ENCODE measurements at regions of chr12 and their contacts with region 1.

Region 1: GRCh38 chr12:66915306-66915904 is 236.5 kb upstream of the GRIP1 start:
- DNase-seq: no peak
- H3K4me3 ChIP-seq: no peak overlapping the region
- H3K27ac ChIP-seq: no peak overlapping the region
- H3K4me1 ChIP-seq: peaks cover 0 to 6% (median 0%) of the 10 kb centered on the region in 4 donors
- H3K27me3 ChIP-seq: no peaks in the 10 kb centered on the region
- CTCF ChIP-seq: no peak
- EP300 ChIP-seq: no peak
- POLR2A ChIP-seq: no peak

Region 2: GRCh38 chr12:66755727-66756395 is 159.5 kb before region 1 on chr12:
- intact Hi-C with region 1: no loop called
- DNase-seq: no peak
- H3K4me3 ChIP-seq: no peak overlapping the region
- H3K27ac ChIP-seq: no peak overlapping the region
- H3K4me1 ChIP-seq: peaks cover 0 to 6% (median 3%) of the 10 kb centered on the region in 4 donors
- H3K27me3 ChIP-seq: no peaks in the 10 kb centered on the region
- CTCF ChIP-seq: no peak
- EP300 ChIP-seq: no peak
- POLR2A ChIP-seq: no peak

Region 3: DNA sequence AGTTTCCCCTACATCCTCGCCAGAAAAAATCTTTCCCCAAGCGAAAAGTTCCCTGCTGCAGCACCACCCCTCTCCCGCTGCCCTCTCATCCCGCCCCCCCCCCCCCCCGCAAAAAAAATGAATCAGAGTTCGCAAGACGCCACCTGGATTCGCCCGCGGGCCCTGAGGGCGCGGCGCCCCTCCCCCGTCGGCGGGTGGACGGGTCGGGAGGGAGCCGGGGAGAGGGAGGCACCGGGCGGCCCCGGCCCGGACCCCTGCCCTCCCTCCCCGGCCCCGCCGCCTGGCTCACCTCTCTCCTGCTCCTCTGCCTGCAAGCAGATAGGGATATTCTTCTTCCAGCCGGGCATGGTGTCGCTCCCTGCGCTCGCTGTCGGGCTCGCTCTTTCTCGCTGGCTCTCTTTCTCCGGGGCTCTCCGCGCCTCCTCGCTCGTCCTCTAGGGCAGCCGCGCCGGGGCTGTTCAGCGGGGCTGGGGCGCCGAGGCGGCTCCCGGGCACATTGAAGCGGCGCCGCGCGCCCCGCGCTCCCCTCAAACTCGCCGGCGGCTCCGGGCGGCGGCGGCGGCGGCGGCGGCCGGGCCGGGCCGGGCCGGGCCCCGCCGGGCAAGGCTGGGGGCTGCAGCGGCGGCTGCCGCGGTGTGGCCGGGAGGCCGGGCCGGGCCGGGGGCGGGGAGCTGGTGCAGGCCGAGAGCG is 153.5 kb after region 1 on chr12:
- intact Hi-C with region 1: loop called (anchors 10 kb)
- DNase-seq: peak; percentile 72
- H3K4me3 ChIP-seq: peak overlapping the region; percentile 76 to 83 (median 79)
- H3K27ac ChIP-seq: peak overlapping the region; percentile 89 to 92 (median 90)
- H3K4me1 ChIP-seq: peaks cover 0 to 27% (median 13%) of the 10 kb centered on the region in 4 donors
- H3K27me3 ChIP-seq: no peaks in the 10 kb centered on the region
- CTCF ChIP-seq: no peak
- EP300 ChIP-seq: no peak
- POLR2A ChIP-seq: no peak

Region 4: DNA sequence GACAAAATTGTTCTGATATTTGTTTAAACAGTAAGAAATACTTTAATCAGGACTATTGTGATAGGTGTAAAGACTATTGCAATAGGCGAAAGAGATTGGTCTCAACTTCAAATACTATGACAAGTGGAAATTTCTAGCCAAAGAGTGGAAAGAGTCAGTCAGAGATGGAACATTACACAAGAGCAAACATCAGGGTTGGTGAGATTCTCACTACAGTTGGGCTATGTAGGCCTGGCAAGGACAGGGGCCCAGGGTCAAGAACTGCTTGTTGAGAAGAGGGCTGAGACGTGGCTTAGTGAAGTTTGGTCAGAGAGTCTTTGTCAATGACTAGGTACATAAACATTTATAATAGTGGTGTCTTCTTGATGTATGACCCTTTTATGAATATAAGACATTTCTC is 373.2 kb after region 1 on chr12:
- intact Hi-C with region 1: no loop called
- DNase-seq: no peak
- H3K4me3 ChIP-seq: no peak overlapping the region
- H3K27ac ChIP-seq: no peak overlapping the region
- H3K4me1 ChIP-seq: peaks cover 0 to 23% (median 0%) of the 10 kb centered on the region in 4 donors
- H3K27me3 ChIP-seq: no peaks in the 10 kb centered on the region
- CTCF ChIP-seq: no peak
- EP300 ChIP-seq: no peak
- POLR2A ChIP-seq: no peak